A549 (cell line): ENCODE measurements at regions of chr4 and their contacts with region 1.

Region 1: GRCh38 chr4:173013232-173013930 is 155.2 kb upstream of the GALNT7 start:
- DNase-seq: peak; percentile 27 to 42
- ATAC-seq: peak; percentile 54 to 68; a peak in 5 of 6 replicates
- H3K4me3 ChIP-seq: no peak overlapping the region
- H3K27ac ChIP-seq: peak overlapping the region; percentile 70 to 80
- H3K4me1 ChIP-seq: peaks cover 23% of the 10 kb centered on the region
- CTCF ChIP-seq: peak; percentile 70
- EP300 ChIP-seq: no peak
- POLR2A ChIP-seq: no peak
- RAD21 ChIP-seq: peak; percentile 72 to 82

Region 2: DNA sequence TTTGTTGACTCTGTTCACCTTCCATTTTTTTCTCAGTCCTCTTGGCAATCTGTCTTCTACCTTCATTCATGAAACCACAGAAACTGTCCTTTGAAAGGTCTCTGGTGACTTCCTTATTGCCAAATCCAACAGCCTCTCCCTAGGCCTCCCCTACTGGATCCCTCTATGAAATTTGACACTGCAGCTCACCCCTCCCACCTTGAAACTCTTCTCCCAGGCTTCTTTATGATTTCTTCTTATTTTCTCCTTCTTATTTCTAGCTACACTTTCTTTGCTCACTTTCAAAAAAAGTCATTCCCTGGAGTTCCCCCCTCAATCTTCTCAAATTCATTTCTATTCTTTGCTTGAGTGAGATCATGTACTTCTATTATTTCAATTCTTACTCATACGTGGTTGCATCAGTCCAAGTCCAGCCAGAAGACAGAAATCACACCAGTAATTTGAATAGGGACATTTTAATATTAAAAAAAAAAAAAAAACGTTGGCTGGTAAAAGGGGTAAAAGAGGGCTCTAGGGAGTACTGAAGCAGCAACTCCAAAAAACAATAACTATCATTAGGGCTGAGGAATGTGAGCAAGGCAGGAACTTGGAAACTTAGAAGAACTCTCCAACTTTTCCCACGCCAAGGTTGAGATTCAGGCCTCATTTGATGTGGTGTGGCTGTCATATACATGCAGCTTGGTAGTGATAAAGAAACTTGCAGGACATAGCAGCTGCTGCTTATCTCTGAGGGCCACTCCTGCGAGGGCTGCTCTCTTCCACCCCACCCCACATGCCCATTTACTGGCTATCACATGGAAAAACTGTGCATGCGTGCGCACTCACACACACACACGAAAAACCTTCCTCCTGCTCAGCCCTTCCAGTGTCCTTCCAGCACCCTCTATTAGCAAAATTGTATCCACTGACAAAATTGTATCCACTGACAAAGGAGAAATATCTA is 14.6 kb before region 1 on chr4:
- CTCF ChIA-PET with region 1: interaction called, 10 read pairs
- POLR2A ChIA-PET with region 1: no interaction called
- DNase-seq: peak in 1 of 2 experiments; percentile 47
- ATAC-seq: peak; percentile 59 to 66
- H3K4me3 ChIP-seq: no peak overlapping the region
- H3K27ac ChIP-seq: peak overlapping the region; percentile 78 to 84
- H3K4me1 ChIP-seq: peaks cover 38% of the 10 kb centered on the region
- CTCF ChIP-seq: no peak
- EP300 ChIP-seq: no peak
- POLR2A ChIP-seq: no peak
- RAD21 ChIP-seq: no peak

Region 3: GRCh38 chr4:173025131-173025530 is 11.8 kb after region 1 on chr4:
- CTCF ChIA-PET with region 1: interaction called, 22 read pairs
- POLR2A ChIA-PET with region 1: no interaction called
- DNase-seq: peak; percentile 35 to 71
- ATAC-seq: peak; percentile 94 to 95
- H3K4me3 ChIP-seq: no peak overlapping the region
- H3K27ac ChIP-seq: no peak overlapping the region
- H3K4me1 ChIP-seq: peaks cover 13% of the 10 kb centered on the region
- CTCF ChIP-seq: peak; percentile 59
- EP300 ChIP-seq: no peak
- POLR2A ChIP-seq: no peak
- RAD21 ChIP-seq: peak; percentile 72 to 79

Region 4: GRCh38 chr4:173211838-173212237 is 198.5 kb after region 1 on chr4:
- CTCF ChIA-PET with region 1: no interaction called
- POLR2A ChIA-PET with region 1: no interaction called
- DNase-seq: peak; percentile 48 to 58
- ATAC-seq: peak; percentile 95 to 98
- H3K4me3 ChIP-seq: no peak overlapping the region
- H3K27ac ChIP-seq: peak overlapping the region in 1 of 2 experiments; percentile 61; a peak in 1 of 6 replicates
- H3K4me1 ChIP-seq: peaks cover 48% of the 10 kb centered on the region
- CTCF ChIP-seq: no peak
- EP300 ChIP-seq: no peak
- POLR2A ChIP-seq: no peak
- RAD21 ChIP-seq: no peak